ENCODE measurements at regions of chr20 and their contacts with region 1.

Region 1: DNA sequence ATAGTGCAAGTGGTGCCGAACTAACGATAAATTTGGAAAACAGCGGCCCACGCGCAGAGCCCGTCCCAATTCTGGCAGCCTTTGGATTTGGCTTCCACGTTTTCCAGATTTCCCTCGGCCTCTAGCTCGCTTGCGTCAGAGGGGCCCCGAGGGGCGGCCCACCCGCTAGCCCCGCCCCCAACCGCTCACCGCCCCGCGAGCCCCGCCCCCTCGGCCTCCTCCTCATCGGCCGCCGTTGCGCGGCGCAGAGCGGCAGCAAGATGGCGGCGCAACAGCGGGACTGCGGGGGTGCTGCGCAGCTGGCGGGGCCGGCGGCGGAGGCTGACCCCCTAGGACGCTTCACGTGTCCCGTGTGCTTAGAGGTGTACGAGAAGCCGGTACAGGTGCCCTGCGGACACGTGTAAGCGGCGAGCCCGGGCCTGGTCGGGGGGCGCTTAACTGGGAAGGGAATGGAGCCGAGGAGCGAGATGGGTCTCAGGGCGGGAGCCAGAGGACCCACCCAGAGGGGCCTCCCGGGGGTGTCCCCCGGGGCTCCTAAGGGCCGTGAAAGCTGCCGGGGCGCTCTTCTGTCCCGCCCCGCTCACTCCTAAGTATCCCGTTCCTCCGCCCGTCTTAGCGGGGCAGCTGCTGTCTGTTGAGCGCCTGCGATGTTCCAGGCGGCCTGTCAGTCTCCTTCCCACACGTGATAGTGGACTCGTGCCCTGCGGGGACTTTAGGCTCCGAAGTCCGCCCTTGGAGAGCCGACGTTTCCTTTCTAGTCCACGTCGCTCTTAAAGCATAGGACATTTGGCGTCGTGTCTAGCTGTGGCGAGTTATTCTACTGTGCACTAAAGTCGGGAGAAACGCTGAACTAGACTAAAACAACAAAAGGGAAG is at the start of gene RNF114:
- DNase-seq: peak; percentile 87
- ATAC-seq: peak; percentile 77
- H3K4me3 ChIP-seq: peak within 1 kb of the TSS; percentile 80 to 99 (median 99)
- H3K27ac ChIP-seq: peak within 1 kb of the TSS; percentile 78
- H3K4me1 ChIP-seq: peaks cover 75% of the 10 kb centered on the region
- H3K27me3 ChIP-seq: no peaks in the 10 kb centered on the region; a peak in 2 of 5 replicates
- CTCF ChIP-seq: peak; percentile 46
- EP300 ChIP-seq: peak in 1 of 2 experiments; percentile 18; a peak in 2 of 4 replicates
- POLR2A ChIP-seq: peak; percentile 87 to 99
- RAD21 ChIP-seq: peak; percentile 31; the same call in 1 of the 2 replicates
- total RNA-seq, gene RNF114: 119 and 137 TPM in 2 replicates

Region 2: DNA sequence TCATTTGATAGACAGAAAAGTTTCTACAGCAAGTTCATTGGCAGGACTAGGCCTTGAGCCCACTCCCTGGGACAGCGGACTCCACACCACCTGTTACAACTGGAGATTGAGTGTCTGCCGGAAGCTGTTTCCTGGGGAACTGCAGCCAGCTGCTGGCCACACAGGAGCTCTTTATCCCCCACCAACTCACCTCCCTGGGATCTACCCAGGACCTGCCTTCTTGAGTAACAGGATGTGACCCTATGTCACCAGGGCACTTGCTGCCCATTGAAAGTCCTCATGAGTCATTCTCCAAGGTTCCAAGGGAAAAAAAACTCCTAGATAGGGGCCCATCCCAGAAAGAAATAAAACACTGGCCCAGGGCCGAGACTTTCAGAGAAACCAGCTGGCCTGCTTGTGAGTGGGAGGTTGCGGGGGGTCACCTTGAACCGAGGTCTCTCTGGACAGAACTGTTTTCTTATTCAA is 161.1 kb before region 1 on chr20:
- CTCF ChIA-PET with region 1: no interaction called
- POLR2A ChIA-PET with region 1: no interaction called
- in situ Hi-C with region 1: no loop called
- intact Hi-C with region 1: no loop called
- DNase-seq: peak; percentile 96
- ATAC-seq: peak; percentile 83
- H3K4me3 ChIP-seq: peak overlapping the region in 2 of 3 experiments; percentile 16 to 52; a peak in 3 of 6 replicates
- H3K27ac ChIP-seq: peak overlapping the region; percentile 42
- H3K4me1 ChIP-seq: peaks cover 74% of the 10 kb centered on the region
- H3K27me3 ChIP-seq: no peaks in the 10 kb centered on the region
- CTCF ChIP-seq: peak; percentile 63
- EP300 ChIP-seq: peak in 1 of 2 experiments; percentile 89; a peak in 3 of 4 replicates
- POLR2A ChIP-seq: 0 out of 4 replicates have a peak, but pooled peaks of 1 of the 2 experiments have one; percentile 42
- RAD21 ChIP-seq: peak; percentile 67

Region 3: DNA sequence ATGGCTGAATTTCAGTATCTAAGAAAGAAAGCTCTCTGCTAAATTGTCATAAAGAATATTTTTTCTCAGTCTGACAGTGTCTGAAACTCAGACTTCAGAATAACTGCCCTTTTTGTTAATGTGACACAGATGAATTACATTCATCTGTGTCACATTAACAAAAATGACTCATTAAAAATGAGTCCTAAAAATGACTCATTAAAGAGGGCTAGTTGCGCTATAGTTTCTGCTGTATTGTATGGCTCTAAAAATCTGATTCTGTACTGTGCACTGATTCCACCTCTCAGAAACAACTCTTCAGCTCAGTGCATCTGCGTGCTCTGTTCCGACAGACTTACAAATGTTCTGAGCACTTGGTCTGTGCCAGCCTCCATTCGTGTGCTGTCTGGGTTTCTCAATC is 14.8 kb after region 1 on chr20:
- CTCF ChIA-PET with region 1: no interaction called
- POLR2A ChIA-PET with region 1: interaction called, 24 read pairs
- in situ Hi-C with region 1: no loop called
- intact Hi-C with region 1: no loop called
- DNase-seq: no peak
- ATAC-seq: no peak
- H3K4me3 ChIP-seq: no peak overlapping the region
- H3K27ac ChIP-seq: no peak overlapping the region
- H3K4me1 ChIP-seq: peaks cover 33% of the 10 kb centered on the region
- H3K27me3 ChIP-seq: no peaks in the 10 kb centered on the region
- CTCF ChIP-seq: no peak
- EP300 ChIP-seq: no peak
- POLR2A ChIP-seq: no peak
- RAD21 ChIP-seq: no peak